MCF 10A (cell line): ENCODE measurements at regions of chr17 and their contacts with region 1.

Region 1: DNA sequence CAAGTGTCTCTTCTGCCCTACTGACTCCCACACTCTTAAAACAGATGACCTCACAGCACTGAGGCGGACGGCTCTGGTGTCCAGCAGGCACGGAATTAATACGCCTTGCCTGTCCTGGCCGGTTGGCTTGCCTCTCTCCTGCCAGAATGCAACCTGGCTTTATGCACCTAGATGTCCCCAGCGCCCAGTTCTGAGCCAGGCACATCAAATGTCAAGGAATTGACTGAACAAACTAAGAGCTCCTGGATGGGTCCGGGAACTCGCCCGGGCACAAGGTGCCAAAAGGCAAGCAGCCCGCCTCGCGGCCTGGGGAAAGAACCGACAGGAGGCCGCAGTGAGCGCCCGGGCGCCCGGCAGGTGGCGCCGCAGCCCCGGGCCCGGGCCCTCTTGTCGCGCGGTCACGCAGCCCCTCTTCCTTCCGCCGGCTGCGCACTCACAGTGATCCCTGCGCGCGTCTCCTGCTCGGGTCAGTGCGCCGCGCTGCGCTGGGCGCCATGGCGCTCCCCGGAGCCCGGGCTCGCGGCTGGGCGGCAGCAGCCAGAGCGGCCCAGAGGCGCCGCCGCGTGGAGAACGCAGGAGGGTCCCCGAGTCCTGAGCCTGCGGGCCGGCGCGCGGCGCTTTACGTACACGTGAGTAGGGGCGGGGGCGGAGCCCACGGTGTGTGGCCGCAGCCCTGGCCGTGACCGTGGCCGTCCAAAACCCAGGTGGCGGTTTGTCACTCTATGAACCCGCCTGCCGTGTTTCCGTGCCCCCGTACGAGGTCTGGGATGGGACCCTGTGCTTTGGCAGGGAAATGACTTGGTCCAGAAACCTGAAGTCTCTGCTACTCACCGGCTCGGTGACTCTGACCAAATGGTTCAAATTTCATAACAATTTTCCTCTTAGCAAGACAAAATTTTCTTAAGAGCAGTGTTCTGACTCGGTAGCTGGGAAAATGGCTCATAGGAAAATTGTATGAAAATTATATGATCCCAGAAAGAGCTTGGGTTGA is at the start of gene RSAD1:
- DNase-seq: peak; percentile 83
- H3K4me3 Mint-ChIP-seq: peak within 1 kb of the TSS; percentile 69
- H3K27ac Mint-ChIP-seq: peak within 1 kb of the TSS; percentile 75
- H3K4me1 Mint-ChIP-seq: peaks cover 25% of the 10 kb centered on the region
- H3K27me3 Mint-ChIP-seq: no peaks in the 10 kb centered on the region
- CTCF ChIP-seq: peak; percentile 81
- total RNA-seq, gene RSAD1: 25.2 and 28.7 TPM in 2 replicates

Region 2: DNA sequence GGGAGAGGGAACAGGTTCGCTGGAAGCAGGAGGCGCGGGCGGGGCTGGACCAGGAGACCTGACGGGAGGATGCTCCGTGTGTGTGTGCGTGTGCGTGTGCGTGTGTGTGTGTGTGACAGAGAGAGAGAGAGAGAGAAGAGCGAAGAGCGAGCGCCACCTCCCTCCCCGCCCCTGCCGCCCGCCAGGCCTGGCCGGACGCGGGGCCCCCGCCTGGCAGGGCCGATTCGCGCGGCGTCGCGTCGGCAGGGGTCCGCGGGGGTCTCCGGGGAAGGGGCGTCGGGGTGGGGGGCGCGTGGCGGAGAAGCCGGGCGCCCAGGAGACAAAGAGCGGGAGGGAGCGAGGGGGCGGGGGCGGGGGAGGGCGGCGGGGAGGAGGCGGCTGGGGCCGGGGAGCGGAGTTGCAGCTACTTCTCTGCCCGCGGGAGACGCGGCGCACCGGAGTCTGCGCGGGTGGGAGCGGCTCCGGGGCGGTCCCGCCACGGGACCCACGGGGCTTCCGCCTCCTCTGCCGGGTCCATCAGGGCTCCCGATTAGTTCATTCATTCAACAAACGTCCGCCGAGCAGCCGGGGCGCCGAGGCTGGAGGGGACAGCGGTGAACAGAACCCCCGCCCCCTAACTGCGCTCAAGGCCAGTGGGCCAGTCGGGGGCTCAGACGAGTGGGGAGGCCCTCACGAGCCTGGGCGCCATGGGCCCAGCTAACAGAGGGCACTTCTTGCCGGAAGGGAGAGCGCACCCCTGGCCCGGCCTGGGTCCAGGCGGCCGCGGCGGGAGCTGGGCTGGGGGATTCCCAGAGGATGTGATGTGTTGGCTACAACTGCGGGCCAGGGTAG is 348.7 kb before region 1 on chr17 and contains the start of gene SAMD14:
- CTCF ChIA-PET with region 1: no interaction called
- POLR2A ChIA-PET with region 1: no interaction called
- intact Hi-C with region 1: no loop called
- DNase-seq: no peak
- H3K4me3 Mint-ChIP-seq: no peak within 1 kb of the TSS
- H3K27ac Mint-ChIP-seq: no peak within 1 kb of the TSS
- H3K4me1 Mint-ChIP-seq: peaks cover 12% of the 10 kb centered on the region
- H3K27me3 Mint-ChIP-seq: peaks cover 14% of the 10 kb centered on the region
- CTCF ChIP-seq: no peak
- total RNA-seq, gene SAMD14: 0.09 TPM in 1 of 2 replicates, not detected in the other

Region 3: DNA sequence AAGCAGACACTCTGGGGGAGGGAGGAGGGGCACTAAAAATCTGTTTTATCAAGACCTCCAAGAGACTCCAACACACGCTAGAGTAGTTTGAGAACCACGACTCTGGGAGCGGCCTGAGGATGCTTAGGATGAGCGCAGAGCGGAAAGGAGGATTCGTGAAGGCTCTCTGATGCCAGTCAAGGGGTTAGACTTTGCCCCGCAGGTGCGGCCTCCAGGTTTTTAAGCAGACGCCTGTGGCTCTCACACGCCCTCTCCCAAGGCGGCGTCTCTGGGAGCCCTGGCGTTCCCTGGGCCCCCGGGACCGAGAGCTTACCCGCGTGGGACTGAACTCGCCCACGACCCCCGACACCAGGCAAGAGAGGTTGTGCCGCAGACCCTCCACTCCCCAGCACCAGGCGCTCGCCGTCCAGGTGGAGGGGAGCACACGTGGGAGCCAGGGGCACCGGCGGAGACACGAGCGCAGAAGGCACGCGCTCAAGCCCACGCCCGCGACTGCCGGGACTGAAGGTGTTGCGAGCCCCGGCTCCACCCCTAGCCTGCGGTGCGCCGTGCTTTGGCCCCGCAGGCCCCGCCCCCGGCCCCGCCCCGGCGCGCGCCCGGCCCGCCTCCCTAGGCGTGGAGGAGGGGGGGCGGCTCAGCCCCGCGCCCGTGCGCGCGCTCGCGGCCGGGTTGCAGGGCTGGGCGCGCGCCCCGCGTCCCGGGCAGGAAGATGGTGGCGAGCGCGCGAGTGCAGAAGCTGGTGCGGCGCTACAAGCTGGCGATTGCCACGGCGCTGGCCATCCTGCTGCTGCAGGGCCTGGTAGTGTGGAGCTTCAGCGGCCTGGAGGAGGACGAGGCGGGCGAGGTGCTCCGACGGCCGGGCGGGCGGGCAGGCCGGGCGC is 133.0 kb before region 1 on chr17 and contains the start of gene XYLT2:
- CTCF ChIA-PET with region 1: interaction called, 5 read pairs
- POLR2A ChIA-PET with region 1: interaction called, 11 read pairs
- intact Hi-C with region 1: no loop called
- DNase-seq: peak; percentile 78
- H3K4me3 Mint-ChIP-seq: peak within 1 kb of the TSS; percentile 88
- H3K27ac Mint-ChIP-seq: peak within 1 kb of the TSS; percentile 90
- H3K4me1 Mint-ChIP-seq: peaks cover 14% of the 10 kb centered on the region
- H3K27me3 Mint-ChIP-seq: no peaks in the 10 kb centered on the region
- CTCF ChIP-seq: no peak
- total RNA-seq, gene XYLT2: 9.6 and 14.0 TPM in 2 replicates

Region 4: DNA sequence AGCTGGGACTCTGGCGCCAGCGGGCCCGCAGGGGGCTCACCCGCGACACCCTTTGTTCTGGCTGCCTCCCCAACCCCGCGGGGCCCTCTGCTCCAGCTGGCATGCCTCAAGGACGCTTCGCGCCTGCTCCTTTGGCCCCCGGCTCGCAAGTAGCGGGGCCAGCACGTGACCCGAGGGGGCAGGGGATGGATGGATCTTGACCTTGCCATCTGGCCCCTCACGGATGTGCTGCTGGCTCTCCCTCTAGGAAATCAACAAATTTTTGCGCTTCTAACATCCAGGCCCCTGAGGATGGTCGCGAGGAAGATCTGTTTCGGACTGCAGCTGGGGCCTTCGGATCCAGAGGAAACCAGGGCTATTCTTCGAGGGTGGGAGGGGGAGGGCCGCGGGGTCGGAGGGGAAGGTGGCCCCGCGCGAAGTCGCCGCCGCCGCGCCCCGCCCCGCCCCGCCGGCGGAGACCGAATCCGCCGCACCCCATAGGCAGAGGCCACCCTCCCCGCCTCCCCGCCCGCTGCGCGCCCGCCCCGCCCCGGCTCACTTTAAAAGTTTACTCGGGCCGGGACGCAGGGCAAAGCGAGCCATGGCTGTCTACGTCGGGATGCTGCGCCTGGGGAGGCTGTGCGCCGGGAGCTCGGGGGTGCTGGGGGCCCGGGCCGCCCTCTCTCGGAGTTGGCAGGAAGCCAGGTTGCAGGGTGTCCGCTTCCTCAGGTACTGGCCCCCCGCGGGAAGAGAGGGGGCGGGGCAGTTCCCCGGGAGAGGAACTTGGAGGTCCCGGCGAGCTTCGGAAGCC is 52.8 kb before region 1 on chr17 and contains the start of gene ACSF2:
- CTCF ChIA-PET with region 1: interaction called, 5 read pairs
- POLR2A ChIA-PET with region 1: interaction called, 13 read pairs
- intact Hi-C with region 1: no loop called
- DNase-seq: peak; percentile 63
- H3K4me3 Mint-ChIP-seq: peak within 1 kb of the TSS; percentile 71
- H3K27ac Mint-ChIP-seq: peak within 1 kb of the TSS; percentile 93
- H3K4me1 Mint-ChIP-seq: peaks cover 16% of the 10 kb centered on the region
- H3K27me3 Mint-ChIP-seq: no peaks in the 10 kb centered on the region
- CTCF ChIP-seq: no peak
- total RNA-seq, gene ACSF2: 10.5 and 17.8 TPM in 2 replicates

Region 5: DNA sequence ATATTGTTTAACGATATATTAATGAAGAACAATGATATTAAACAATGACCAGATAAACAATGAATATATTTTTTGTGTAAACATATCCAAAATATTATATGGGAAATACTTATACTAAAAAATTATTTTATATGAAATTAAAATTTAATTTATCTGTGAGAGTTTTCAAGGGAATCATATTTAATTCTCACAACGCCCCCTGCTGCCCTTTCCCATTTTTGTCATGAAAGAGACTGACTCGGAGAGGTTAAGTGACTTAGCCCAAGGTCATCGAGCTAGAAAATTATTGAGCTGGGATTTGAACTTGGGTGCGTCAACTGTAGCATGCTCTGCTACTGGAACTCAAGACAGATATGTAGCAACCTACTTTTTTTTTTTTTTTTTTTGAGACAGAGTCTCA is 22.4 kb after region 1 on chr17:
- CTCF ChIA-PET with region 1: interaction called, 68 read pairs
- POLR2A ChIA-PET with region 1: interaction called, 4 read pairs
- intact Hi-C with region 1: loop called (anchors 1 kb)
- DNase-seq: peak; percentile 59
- H3K4me3 Mint-ChIP-seq: no peak overlapping the region
- H3K27ac Mint-ChIP-seq: no peak overlapping the region
- H3K4me1 Mint-ChIP-seq: peaks cover 11% of the 10 kb centered on the region
- H3K27me3 Mint-ChIP-seq: no peaks in the 10 kb centered on the region
- CTCF ChIP-seq: peak; percentile 31

Region 6: DNA sequence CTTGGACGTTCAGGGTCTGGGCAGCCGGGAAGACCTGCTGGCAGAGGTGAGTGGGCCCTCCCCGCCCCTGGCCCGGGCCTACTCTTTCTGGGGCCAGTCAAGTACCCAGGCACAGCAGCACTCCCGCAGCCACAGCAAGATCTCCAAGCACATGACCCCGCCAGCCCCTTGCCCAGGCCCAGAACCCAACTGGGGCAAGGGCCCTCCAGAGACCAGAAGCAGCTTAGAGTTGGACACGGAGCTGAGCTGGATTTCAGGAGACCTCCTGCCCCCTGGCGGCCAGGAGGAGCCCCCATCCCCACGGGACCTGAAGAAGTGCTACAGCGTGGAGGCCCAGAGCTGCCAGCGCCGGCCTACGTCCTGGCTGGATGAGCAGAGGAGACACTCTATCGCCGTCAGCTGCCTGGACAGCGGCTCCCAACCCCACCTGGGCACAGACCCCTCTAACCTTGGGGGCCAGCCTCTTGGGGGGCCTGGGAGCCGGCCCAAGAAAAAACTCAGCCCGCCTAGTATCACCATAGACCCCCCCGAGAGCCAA is 147.4 kb after region 1 on chr17:
- CTCF ChIA-PET with region 1: interaction called, 80 read pairs
- POLR2A ChIA-PET with region 1: interaction called, 3 read pairs
- intact Hi-C with region 1: loop called (anchors 1 kb)
- DNase-seq: peak; percentile 75
- H3K4me3 Mint-ChIP-seq: no peak overlapping the region
- H3K27ac Mint-ChIP-seq: no peak overlapping the region
- H3K4me1 Mint-ChIP-seq: peaks cover 6% of the 10 kb centered on the region
- H3K27me3 Mint-ChIP-seq: no peaks in the 10 kb centered on the region
- CTCF ChIP-seq: peak; percentile 72

Region 7: DNA sequence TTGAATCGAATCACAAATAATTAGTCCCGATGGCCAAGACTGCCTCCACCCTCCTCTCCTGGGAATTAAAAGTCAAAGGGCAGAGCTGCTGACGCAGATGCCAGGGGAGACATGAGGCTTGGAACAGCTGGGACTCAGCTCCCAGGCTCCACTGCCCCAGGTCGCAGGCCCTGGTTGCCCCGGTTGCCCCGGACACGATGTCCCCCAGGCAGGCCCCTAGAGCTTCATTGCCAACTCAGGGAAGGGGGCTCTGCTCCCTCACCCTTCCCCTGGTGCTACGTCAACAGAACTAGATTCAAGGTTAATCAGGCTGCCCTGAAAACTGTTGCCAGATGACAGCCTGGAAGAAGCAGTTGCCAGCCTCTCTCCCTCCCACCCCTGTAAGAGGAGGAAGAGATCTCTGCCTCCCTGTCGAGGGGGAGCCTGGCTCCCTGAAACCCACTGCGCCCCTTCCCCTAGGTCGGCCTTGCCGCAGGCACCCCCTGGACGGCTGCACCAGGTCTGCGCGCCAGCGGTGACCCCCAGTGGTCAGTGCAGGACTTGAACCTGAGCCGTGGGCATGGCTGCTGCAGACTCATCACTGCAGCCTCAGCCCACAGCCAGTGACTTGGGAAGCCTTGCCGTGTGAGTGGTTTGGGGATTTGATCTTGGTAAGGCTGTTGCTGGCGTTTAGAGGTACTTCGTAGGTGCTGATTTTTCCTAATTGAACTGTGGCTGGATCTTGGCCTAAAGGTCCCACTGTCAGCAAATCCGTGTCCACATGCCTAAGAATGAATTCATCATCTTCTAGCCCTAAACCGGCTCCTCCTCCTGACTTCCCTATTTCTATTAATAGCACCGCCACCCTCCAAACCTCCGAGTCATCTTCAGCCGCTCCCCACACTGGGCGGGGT is 471.5 kb after region 1 on chr17:
- CTCF ChIA-PET with region 1: no interaction called
- POLR2A ChIA-PET with region 1: no interaction called
- intact Hi-C with region 1: no loop called
- DNase-seq: peak; percentile 92
- H3K4me3 Mint-ChIP-seq: peak overlapping the region; percentile 42
- H3K27ac Mint-ChIP-seq: peak overlapping the region; percentile 67
- H3K4me1 Mint-ChIP-seq: peaks cover 49% of the 10 kb centered on the region
- H3K27me3 Mint-ChIP-seq: no peaks in the 10 kb centered on the region
- CTCF ChIP-seq: peak; percentile 89